HEK293 (cell line): ENCODE measurements at regions of chr1 and their contacts with region 1.

Region 1: GRCh38 chr1:22131875-22132486 is 10.9 kb downstream of the WNT4 start:
- H3K4me3 ChIP-seq: no peak overlapping the region
- H3K27ac ChIP-seq: no peak overlapping the region
- H3K4me1 ChIP-seq: no peaks in the 10 kb centered on the region
- CTCF ChIP-seq: peak; percentile 90

Region 2: DNA sequence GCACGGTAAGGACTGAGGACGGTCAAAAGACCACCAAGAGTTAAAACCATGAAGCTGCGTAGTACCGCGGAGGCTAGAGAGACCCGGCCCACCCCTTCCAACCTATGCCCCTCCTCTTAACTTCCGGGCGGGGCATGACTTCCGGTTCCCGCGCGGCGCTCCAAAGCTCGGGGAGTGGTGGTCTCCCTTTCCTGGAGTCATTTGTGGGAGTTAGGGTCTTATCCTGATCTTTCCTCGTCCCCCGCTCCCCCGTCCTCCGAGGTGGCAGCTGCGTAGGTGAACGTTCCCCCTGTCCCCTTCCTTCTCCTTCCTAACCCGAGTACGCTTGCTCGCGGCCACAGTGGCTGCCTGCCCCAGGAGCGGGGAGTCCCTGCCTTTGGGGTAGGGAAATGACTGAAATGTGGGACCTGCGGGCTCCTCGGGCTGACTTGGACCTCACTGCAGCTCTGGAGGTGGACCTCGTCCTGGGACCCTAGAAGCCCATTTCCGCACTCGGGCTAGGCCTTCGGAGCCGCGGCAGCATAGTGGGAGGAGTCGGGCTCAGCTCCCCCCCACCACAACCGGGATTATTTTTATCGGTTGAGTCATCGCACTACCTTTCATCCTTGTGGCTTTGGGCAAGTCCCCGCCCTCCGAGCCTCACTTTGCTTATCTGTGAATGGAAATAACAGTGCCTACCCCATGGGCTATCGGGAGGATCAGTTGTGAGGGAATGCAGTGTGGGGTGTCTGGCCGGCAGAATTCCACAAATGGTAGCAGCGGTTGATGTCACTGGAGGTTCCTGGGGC is 106.4 kb before region 1 on chr1:
- CTCF ChIA-PET with region 1: no interaction called
- POLR2A ChIA-PET with region 1: no interaction called
- H3K4me3 ChIP-seq: peak overlapping the region; percentile 98
- H3K27ac ChIP-seq: peak overlapping the region; percentile 91
- H3K4me1 ChIP-seq: no peaks in the 10 kb centered on the region
- CTCF ChIP-seq: no peak

Region 3: GRCh38 chr1:22142315-22143064 is 10.5 kb after region 1 on chr1:
- CTCF ChIA-PET with region 1: interaction called, 14 read pairs
- POLR2A ChIA-PET with region 1: no interaction called
- H3K4me3 ChIP-seq: peak overlapping the region; percentile 40
- H3K27ac ChIP-seq: peak overlapping the region; percentile 17; the same call in 1 of the 2 replicates
- H3K4me1 ChIP-seq: no peaks in the 10 kb centered on the region; the same call in 1 of the 2 replicates
- CTCF ChIP-seq: peak; percentile 44

Region 4: DNA sequence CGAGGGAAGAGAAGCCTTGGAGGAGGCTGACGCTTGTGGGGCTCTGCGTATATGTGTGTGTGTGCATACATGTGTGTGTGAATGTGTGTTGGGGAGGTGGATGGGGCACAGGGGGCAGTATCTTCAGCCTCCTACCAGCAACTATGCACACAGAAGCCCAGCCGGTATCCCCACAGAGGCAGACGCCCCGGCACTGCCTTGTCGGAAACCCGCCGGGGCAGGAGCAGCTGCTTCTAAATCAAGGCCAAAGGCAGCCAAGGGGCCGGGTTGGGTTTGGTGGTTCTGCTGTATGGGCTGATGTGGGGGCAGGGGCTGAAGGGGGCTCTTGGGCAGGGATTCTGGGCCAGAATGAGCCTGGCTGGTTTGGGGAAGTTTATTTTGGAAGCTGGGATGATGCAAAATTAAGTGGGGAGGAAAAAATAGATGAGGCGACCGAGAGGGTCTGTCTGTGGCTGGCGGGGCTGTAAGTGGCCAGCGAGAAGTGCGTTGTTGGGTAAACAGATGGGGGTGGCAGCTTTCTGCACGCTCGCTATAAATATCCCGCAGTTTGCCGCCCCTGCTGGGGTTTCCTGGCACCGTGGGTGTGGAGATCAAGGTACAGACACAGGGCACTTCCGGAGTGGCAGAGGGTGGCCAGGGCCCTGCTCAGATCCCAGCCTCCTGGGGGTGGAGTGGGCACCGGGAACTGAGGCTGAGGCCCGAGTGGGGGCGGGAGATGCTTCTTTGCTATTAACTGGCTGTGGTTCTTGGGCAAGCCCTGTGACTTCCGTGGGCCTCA is 21.9 kb after region 1 on chr1:
- CTCF ChIA-PET with region 1: no interaction called
- POLR2A ChIA-PET with region 1: no interaction called
- H3K4me3 ChIP-seq: no peak overlapping the region
- H3K27ac ChIP-seq: no peak overlapping the region
- H3K4me1 ChIP-seq: no peaks in the 10 kb centered on the region
- CTCF ChIP-seq: no peak

Region 5: GRCh38 chr1:22641906-22642636 is 510.1 kb after region 1 on chr1:
- CTCF ChIA-PET with region 1: interaction called, 12 read pairs
- POLR2A ChIA-PET with region 1: no interaction called
- H3K4me3 ChIP-seq: no peak overlapping the region
- H3K27ac ChIP-seq: no peak overlapping the region
- H3K4me1 ChIP-seq: no peaks in the 10 kb centered on the region
- CTCF ChIP-seq: peak; percentile 95